ENCODE measurements at regions of chr1 and their contacts with region 1.

Region 1: DNA sequence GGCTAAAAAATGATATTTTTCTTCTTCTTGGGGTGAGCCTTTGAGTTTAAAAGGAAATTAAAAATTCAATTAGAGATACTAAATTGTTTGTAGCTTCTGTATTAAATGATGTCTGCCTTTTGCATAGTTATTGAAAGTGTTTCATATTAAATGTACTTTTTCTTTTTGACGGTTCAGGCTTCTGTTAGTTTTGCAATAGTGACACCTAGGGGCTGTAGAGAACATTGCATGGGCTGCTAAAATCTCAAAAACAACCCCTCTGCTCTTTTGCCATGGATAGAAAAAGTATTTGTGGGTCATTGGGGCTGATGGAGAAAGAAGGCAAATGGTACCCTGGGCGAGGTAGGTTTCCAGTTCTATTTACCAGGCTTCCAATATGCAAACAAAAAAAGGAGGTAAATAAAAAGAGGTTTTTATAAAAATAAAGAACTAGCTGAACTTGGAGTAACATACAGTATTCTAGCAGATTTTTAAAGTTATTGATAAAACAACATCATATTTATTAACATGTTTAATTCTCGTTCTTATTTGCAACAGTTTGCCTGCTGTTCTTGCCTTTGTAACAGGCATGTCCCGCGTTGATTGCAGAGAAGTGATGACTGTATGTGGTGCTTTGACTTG is 115.4 kb upstream of the HOOK1 start:
- DNase-seq: peak; percentile 65
- ATAC-seq: peak; percentile 49
- H3K4me3 ChIP-seq: no peak overlapping the region
- H3K27ac ChIP-seq: no peak overlapping the region
- H3K4me1 ChIP-seq: no peaks in the 10 kb centered on the region
- H3K27me3 ChIP-seq: no peaks in the 10 kb centered on the region
- CTCF ChIP-seq: peak; percentile 94

Region 2: GRCh38 chr1:58816072-58816746 is 883.1 kb before region 1 on chr1:
- CTCF ChIA-PET with region 1: no interaction called
- POLR2A ChIA-PET with region 1: no interaction called
- intact Hi-C with region 1: loop called (anchors 1 kb)
- DNase-seq: peak; percentile 89
- ATAC-seq: peak; percentile 55
- H3K4me3 ChIP-seq: peak overlapping the region; percentile 90
- H3K27ac ChIP-seq: peak overlapping the region; percentile 89
- H3K4me1 ChIP-seq: peaks cover 59% of the 10 kb centered on the region
- H3K27me3 ChIP-seq: no peaks in the 10 kb centered on the region
- CTCF ChIP-seq: peak; percentile 11; the same call in 1 of the 2 replicates

Region 3: DNA sequence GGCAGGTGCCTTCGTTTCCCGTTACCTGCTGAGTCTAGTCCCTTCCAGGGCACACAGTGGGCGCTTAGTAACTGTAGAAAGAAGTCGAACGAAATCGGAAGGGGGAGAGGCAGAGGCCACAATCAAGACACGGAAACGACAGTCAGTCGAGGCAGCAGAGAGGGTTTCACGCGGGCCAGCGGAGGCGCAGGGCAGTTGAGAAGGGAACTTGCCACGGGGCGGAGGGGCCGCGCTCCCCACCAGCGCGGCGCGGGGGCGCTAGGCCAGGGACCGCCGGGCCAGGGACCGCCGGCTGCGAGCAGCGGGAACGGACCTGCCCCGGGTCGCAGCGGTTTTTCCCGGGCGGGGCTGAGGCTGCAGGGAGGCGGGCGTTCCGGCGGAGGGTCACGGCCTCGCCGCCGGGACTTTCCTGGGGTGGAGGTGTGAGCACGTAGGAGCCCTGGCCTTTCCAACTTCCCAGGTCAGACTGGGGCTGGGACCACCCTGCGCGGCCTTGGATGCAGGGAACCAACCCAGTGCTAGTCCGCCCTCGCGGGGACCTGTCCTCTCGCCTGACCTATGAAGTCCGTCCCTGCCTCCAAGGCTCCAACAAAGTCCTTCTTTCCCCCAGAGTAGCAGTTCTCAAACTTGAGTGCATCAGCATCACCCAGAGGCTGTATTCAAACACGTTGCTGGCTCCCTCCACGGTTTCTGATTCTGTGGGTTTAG is 552.5 kb before region 1 on chr1:
- CTCF ChIA-PET with region 1: no interaction called
- POLR2A ChIA-PET with region 1: no interaction called
- intact Hi-C with region 1: loop called (anchors 10 kb)
- DNase-seq: peak; percentile 46
- ATAC-seq: peak; percentile 11
- H3K4me3 ChIP-seq: peak overlapping the region; percentile 68
- H3K27ac ChIP-seq: peak overlapping the region; percentile 31
- H3K4me1 ChIP-seq: peaks cover 61% of the 10 kb centered on the region
- H3K27me3 ChIP-seq: no peaks in the 10 kb centered on the region
- CTCF ChIP-seq: no peak

Region 4: DNA sequence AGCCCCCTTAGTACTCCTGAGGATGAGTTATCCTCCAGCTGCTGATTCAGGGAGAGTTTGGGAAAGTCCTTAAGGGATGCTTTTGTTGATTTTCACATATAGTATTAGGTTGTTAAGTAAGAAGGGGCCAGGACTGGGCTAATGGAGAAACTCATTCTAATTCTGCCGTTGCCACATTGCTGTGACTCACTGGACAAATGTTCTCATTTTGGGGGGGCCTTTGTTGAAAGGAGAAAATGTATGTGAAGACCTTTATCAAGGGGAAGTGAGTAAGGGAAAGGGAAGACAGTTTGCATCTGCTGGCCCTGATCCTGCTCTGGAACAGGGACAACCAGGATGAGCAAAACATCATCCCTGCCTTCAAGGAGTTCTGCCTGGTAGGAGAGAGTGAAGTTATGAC is 525.6 kb before region 1 on chr1:
- CTCF ChIA-PET with region 1: no interaction called
- POLR2A ChIA-PET with region 1: no interaction called
- intact Hi-C with region 1: no loop called
- DNase-seq: peak; percentile 66
- ATAC-seq: peak; percentile 74
- H3K4me3 ChIP-seq: no peak overlapping the region
- H3K27ac ChIP-seq: no peak overlapping the region; the same call in 1 of the 2 replicates
- H3K4me1 ChIP-seq: peaks cover 22% of the 10 kb centered on the region
- H3K27me3 ChIP-seq: no peaks in the 10 kb centered on the region
- CTCF ChIP-seq: no peak

Region 5: GRCh38 chr1:59332983-59333382 is 366.4 kb before region 1 on chr1:
- CTCF ChIA-PET with region 1: no interaction called
- POLR2A ChIA-PET with region 1: no interaction called
- intact Hi-C with region 1: loop called (anchors 10 kb)
- DNase-seq: peak; percentile 65
- ATAC-seq: peak; percentile 69
- H3K4me3 ChIP-seq: no peak overlapping the region
- H3K27ac ChIP-seq: no peak overlapping the region
- H3K4me1 ChIP-seq: peaks cover 11% of the 10 kb centered on the region
- H3K27me3 ChIP-seq: no peaks in the 10 kb centered on the region
- CTCF ChIP-seq: no peak

Region 6: DNA sequence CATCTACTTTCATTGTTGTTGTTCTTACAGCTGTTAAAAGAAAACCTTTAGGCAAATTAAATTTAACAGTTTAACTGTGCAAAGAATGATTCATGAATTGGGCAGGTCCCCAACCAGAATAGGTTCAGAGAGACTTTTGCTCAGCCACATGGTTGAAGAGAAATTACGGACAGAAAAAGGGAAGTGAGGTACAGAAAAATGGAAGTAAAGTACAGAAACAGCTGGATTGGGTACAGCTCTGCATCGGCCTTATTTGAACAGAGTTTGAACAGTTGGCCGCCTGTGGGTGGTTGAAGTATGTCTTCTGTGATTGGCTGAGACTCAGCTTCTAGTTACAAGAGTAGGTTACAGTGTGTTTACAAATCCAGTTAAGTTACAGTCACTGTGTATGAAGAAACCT is 192.4 kb before region 1 on chr1:
- CTCF ChIA-PET with region 1: no interaction called
- POLR2A ChIA-PET with region 1: no interaction called
- intact Hi-C with region 1: loop called (anchors 1 kb)
- DNase-seq: peak; percentile 64
- ATAC-seq: peak; percentile 94
- H3K4me3 ChIP-seq: 0 out of 2 replicates have a peak overlapping the region, but pooled peaks have one; percentile 3
- H3K27ac ChIP-seq: peak overlapping the region; percentile 52
- H3K4me1 ChIP-seq: peaks cover 19% of the 10 kb centered on the region
- H3K27me3 ChIP-seq: no peaks in the 10 kb centered on the region
- CTCF ChIP-seq: no peak

Region 7: GRCh38 chr1:59596441-59596861 is 102.9 kb before region 1 on chr1:
- CTCF ChIA-PET with region 1: interaction called, 15 read pairs
- POLR2A ChIA-PET with region 1: no interaction called
- intact Hi-C with region 1: loop called (anchors 5 kb)
- DNase-seq: peak; percentile 85
- ATAC-seq: peak; percentile 84
- H3K4me3 ChIP-seq: no peak overlapping the region
- H3K27ac ChIP-seq: peak overlapping the region; percentile 94
- H3K4me1 ChIP-seq: peaks cover 25% of the 10 kb centered on the region
- H3K27me3 ChIP-seq: no peaks in the 10 kb centered on the region
- CTCF ChIP-seq: no peak

Region 8: GRCh38 chr1:60055336-60055735 is 356.0 kb after region 1 on chr1:
- CTCF ChIA-PET with region 1: no interaction called
- POLR2A ChIA-PET with region 1: no interaction called
- intact Hi-C with region 1: no loop called
- DNase-seq: peak; percentile 6
- ATAC-seq: no peak
- H3K4me3 ChIP-seq: no peak overlapping the region
- H3K27ac ChIP-seq: no peak overlapping the region
- H3K4me1 ChIP-seq: no peaks in the 10 kb centered on the region
- H3K27me3 ChIP-seq: peaks cover 53% of the 10 kb centered on the region
- CTCF ChIP-seq: no peak

Measured in PC-3 (cell line).